ENCODE measurements at regions of chr19 and their contacts with region 1.

Region 1: GRCh38 chr19:34430738-34431625 is 2.8 kb downstream of the UBA2 start:
- DNase-seq: peak; percentile 78
- CTCF ChIP-seq: peak; percentile 69

Region 2: GRCh38 chr19:34399886-34400285 is 31.1 kb before region 1 on chr19:
- CTCF ChIA-PET with region 1: interaction called, 10 read pairs
- POLR2A ChIA-PET with region 1: no interaction called
- DNase-seq: no peak
- CTCF ChIP-seq: no peak

Region 3: DNA sequence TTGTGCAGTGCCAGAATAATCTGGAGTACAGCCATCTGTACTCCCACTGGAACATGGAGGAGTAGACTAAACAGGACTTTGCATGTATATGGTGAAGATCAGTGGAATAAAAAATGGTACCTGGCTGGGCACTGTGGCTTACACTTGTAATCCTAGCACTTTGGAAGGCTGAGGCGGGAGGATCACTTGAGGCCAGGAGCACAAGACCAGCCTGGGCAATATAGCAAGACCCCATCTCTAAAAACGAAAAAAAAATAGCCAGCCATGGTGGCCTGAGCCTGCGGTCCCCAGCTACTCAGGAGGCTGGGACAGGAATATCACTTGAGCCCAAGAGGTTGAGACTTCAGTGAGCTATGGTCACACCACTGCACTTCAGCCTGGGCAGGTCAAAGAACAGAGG is 17.2 kb after region 1 on chr19:
- CTCF ChIA-PET with region 1: interaction called, 10 read pairs
- POLR2A ChIA-PET with region 1: interaction called, 4 read pairs
- DNase-seq: no peak
- CTCF ChIP-seq: no peak

Region 4: DNA sequence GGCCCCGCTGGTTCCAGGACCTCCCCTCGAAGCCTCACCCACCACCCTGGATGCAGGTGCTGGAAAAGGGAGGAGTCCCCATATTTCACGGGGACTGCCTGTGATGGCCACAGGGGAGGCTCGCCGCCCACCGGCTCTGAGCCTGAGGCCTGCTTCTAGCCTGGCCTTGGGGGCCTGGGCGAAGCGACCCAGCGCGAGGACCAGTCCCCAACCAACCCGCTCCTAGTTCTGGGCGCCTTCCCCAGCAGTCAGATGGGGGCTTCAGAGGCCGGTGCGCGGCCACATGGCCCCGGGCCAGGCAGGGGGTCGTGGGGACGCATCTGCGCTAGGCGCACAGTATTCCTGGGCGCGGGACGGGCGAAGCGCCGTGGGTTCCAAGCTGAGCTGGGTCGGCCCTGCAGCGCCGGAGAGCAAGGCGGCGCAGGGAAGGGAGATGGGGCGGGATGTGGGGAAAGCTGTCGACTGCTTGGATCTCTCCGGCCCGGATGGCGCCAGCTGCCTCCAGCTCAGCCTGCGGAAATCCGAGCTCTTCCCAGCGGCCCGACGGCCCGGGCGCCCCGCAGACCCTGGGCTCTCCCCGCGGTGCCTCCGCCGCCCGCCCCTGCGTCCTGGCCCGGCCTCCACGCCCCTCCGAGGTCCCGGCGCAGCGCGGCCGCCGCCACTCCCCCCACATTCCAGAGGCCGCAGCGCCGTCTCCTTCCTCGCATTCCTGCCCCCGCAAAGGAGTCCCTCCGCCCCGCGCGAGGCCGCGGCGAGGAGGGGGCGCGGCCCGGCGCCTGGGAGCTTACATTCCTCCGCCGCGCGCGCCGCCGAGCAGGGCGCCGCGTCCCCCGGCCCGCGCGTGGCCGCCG is 50.2 kb after region 1 on chr19 and contains the start of gene WTIP:
- CTCF ChIA-PET with region 1: no interaction called
- POLR2A ChIA-PET with region 1: no interaction called
- DNase-seq: no peak
- CTCF ChIP-seq: no peak